H1 (cell line): ENCODE measurements at regions of chr12 and their contacts with region 1.

Region 1: DNA sequence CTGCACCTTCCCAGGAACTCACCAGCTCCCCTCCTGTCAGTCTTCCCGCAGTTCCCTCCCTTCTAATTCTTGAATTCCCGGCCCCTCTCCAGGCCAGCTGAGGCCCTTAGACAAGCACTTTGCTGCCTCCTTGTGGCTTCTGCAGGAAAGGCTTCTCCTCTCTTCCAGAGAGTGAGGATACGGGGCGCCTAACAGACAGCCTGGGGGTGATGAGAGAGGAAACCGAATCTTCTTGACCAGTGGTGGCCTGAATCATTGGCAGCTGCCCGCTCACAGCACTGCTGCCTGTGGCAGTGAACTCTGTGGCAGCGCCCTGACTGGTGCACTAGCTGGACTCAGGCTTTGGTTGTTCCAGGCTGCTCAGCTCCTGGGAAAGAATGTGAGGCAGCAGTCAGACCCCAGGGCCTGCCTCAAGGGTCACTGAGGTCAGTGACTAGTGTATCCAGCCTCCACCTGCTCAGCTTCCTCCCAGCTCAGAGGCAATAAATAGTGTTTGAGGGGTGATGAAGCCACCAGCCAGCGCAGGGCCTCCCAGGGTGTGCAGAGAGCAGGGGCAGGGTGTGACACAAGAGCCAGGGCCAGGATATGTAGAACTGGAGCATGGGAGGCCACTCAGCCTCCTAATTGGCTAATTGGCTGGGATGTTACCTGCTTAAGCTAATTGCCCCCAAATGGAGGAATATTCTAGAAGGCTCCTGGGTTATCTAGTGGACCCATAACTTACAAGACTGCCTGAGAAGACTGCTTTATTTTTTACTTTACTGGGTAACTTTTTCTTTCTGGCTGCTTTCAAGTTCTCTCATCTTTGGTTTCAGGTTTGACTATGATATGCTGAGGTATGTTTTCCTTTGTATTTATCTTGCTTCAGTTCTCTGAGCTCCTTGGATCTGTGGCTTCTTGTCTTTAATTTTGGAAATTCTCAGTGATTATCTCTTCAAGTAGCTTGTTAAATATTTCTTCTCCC is 12.9 kb upstream of the MCRS1 start:
- DNase-seq: peak; percentile 77 to 92
- H3K4me3 ChIP-seq: no peak overlapping the region
- H3K27ac ChIP-seq: no peak overlapping the region
- H3K4me1 ChIP-seq: peaks cover 0 to 6% (median 4%) of the 10 kb centered on the region in 4 experiments; a peak in 4 of 7 replicates
- H3K27me3 ChIP-seq: no peaks in the 10 kb centered on the region
- CTCF ChIP-seq: peak; percentile 74 to 97 (median 94)
- EP300 ChIP-seq: no peak
- POLR2A ChIP-seq: no peak
- RAD21 ChIP-seq: peak; percentile 88

Region 2: DNA sequence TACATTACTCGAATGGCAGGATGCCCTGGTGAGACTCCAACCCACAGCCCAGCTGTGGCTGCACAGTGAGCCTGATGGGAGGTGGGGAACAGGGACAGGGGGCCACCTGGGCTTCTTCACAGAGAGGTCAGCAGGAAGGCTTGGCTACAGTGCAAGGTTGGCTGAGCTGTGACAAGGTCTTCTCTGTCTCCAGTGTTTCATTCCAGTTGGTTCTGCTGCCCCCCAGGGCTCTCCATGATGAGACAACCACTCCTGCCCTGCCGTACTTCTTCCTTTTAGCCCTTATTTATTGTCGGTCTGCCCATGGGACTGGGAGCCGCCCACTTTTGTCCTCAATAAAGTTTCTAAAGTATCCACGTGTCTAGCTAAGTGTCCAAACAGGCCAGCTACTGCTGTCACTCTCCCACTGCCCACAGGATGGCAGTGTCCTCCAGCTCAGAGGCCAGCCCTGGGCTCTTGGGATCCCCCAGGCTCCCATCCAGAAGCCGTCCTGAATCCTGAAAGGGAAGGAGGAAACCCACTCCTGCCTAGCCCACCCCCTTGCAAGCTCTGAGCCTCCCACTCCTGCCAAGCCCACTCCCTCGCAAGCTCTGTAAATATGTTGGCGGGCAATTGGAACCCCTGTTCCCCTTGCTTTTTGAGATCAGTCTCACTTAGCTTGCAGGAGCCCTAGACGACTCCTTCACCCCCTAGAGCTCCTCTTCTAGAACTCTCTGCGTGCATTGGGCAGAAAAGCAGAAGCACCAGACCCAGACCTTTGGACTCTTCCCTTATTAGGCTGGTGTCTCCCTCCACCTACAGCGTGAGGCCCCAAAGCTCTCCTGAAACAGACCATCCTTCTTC is 249.3 kb before region 1 on chr12:
- CTCF ChIA-PET with region 1: interaction called, 12 read pairs
- POLR2A ChIA-PET with region 1: no interaction called
- DNase-seq: peak in 1 of 2 experiments; percentile 68
- H3K4me3 ChIP-seq: no peak overlapping the region
- H3K27ac ChIP-seq: no peak overlapping the region
- H3K4me1 ChIP-seq: no peaks in the 10 kb centered on the region; a peak in 2 of 7 replicates
- H3K27me3 ChIP-seq: peaks cover 33 to 50% (median 43%) of the 10 kb centered on the region in 4 experiments
- CTCF ChIP-seq: peak; percentile 86 to 89 (median 88)
- EP300 ChIP-seq: no peak
- POLR2A ChIP-seq: no peak
- RAD21 ChIP-seq: peak; percentile 86 to 93

Region 3: DNA sequence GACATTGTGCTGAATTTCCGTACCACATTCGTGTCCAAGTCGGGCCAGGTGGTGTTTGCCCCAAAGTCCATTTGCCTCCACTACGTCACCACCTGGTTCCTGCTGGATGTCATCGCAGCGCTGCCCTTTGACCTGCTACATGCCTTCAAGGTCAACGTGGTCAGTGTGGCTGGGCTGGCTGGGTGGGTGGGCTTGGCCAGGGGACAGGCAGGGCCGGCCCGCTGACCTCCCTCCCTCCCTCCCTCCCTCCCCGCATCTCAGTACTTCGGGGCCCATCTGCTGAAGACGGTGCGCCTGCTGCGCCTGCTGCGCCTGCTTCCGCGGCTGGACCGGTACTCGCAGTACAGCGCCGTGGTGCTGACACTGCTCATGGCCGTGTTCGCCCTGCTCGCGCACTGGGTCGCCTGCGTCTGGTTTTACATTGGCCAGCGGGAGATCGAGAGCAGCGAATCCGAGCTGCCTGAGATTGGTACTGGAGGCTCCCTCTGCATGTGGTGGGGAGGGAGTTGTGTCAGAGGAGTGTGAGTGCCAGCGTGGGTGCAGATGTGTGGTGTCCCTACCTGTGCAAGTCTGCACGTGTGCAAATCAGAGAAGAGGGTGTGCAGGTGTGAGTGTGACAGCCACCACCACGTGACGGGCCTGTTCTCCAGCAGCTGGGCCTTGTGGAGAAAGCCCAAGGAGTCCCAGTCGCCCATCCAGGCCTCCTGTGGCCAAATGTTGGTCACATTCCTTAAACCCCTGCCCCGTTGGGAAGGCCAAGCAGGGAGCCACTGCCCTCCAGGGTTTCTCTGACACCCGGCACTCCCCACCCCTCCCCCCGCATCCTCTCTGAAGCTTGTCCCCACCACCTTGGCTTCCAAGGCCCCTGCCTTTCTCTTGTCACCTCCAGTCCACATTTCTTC is 36.7 kb before region 1 on chr12:
- CTCF ChIA-PET with region 1: interaction called, 17 read pairs
- POLR2A ChIA-PET with region 1: no interaction called
- DNase-seq: no peak
- H3K4me3 ChIP-seq: peak overlapping the region; percentile 32 to 51 (median 44)
- H3K27ac ChIP-seq: no peak overlapping the region
- H3K4me1 ChIP-seq: peaks cover 0 to 31% (median 17%) of the 10 kb centered on the region in 4 experiments; a peak in 6 of 7 replicates
- H3K27me3 ChIP-seq: peaks cover 46 to 98% (median 94%) of the 10 kb centered on the region in 4 experiments
- CTCF ChIP-seq: no peak
- EP300 ChIP-seq: no peak
- POLR2A ChIP-seq: no peak
- RAD21 ChIP-seq: no peak

Region 4: DNA sequence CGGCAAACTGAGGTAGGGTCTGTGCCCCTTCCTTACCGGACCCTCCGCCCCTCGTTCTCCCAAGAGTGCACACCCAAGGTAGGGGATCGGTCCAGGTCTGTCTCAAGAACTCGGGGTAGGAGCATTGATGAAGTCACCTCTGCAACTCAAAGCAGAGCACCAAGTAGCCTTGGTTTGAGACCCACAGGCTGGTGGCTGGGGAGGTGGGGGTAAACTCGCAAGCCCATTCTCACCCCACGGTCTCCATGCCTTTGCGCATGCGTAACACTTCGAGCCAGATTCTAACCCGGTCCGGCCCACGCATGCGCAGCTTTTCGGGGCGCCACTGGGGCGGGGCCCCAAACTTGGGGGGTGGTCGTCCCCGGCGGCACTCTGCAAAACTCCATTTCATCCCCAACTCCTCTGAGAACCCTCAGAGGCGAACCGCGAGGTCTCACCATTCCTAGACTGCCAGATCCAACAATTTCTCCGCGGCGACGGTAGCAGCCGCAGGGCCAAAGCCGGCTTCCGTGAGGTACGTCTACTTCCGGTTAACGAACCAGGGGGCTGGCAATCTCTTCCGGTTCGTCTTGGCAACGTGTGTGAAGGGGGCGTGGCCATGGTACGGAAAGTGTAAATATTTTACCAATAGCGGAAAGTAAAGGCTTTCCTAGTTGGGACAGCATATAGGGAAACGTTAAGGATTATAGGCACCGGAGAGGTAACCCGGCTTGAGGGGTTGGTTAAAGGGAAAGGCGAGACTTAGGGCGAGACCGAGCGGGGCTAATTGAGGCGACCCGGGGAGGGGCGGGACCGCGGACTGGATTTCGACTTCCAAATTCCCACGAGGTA is 13.0 kb before region 1 on chr12 and contains the start of gene MCRS1:
- CTCF ChIA-PET with region 1: interaction called, 57 read pairs
- POLR2A ChIA-PET with region 1: interaction called, 20 read pairs
- DNase-seq: peak; percentile 44 to 92
- H3K4me3 ChIP-seq: peak within 1 kb of the TSS; percentile 75 to 100 (median 96)
- H3K27ac ChIP-seq: peak within 1 kb of the TSS; percentile 89
- H3K4me1 ChIP-seq: no peaks in the 10 kb centered on the region; a peak in 3 of 7 replicates
- H3K27me3 ChIP-seq: no peaks in the 10 kb centered on the region
- CTCF ChIP-seq: no peak
- EP300 ChIP-seq: no peak
- POLR2A ChIP-seq: peak; percentile 95 to 96
- RAD21 ChIP-seq: no peak
- total RNA-seq, gene MCRS1: 90.3 and 92.5 TPM in 2 replicates

Region 5: GRCh38 chr12:49615725-49616124 is 34.9 kb after region 1 on chr12:
- CTCF ChIA-PET with region 1: interaction called, 14 read pairs
- POLR2A ChIA-PET with region 1: interaction called, 3 read pairs
- DNase-seq: no peak
- H3K4me3 ChIP-seq: no peak overlapping the region
- H3K27ac ChIP-seq: no peak overlapping the region
- H3K4me1 ChIP-seq: no peaks in the 10 kb centered on the region
- H3K27me3 ChIP-seq: no peaks in the 10 kb centered on the region
- CTCF ChIP-seq: no peak
- EP300 ChIP-seq: no peak
- POLR2A ChIP-seq: no peak
- RAD21 ChIP-seq: no peak